H1 (cell line): ENCODE measurements at regions of chr1 and their contacts with region 1.

Region 1: DNA sequence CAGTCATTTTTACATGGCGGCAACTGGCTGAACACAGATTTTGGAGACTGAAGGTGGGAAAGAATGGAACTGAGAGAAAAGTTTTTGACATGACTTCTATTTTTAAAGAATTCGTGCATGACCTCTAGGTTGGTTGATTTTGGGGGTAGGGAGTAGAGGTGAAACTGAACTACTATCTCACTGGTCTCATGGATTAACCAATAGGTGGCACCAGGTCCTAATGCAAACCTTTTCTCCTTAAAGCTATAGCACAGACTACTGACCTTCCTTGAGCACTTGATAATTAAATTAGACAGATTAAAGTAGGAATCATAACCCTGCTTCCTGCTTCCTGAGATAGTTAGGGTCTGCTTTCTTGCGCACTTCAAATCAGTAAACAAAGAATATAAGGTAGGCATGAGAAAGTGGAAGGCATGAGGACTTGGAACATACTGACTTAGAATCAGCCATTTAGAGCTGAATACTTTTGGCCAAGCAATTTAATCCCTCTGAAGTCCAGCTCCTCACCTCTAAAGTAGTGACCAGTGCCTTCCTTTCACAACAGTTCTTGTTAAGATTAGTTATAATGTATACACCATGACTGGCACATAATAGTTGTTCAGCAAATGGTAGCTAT is 206.0 kb downstream of the CENPF start:
- DNase-seq: no peak
- H3K4me3 ChIP-seq: no peak overlapping the region
- H3K27ac ChIP-seq: no peak overlapping the region
- H3K4me1 ChIP-seq: no peaks in the 10 kb centered on the region
- H3K27me3 ChIP-seq: no peaks in the 10 kb centered on the region
- CTCF ChIP-seq: peak in 2 of 3 experiments; percentile 60 to 62; a peak in 2 of 4 replicates
- EP300 ChIP-seq: no peak
- POLR2A ChIP-seq: no peak
- RAD21 ChIP-seq: peak; percentile 86 to 88

Region 2: DNA sequence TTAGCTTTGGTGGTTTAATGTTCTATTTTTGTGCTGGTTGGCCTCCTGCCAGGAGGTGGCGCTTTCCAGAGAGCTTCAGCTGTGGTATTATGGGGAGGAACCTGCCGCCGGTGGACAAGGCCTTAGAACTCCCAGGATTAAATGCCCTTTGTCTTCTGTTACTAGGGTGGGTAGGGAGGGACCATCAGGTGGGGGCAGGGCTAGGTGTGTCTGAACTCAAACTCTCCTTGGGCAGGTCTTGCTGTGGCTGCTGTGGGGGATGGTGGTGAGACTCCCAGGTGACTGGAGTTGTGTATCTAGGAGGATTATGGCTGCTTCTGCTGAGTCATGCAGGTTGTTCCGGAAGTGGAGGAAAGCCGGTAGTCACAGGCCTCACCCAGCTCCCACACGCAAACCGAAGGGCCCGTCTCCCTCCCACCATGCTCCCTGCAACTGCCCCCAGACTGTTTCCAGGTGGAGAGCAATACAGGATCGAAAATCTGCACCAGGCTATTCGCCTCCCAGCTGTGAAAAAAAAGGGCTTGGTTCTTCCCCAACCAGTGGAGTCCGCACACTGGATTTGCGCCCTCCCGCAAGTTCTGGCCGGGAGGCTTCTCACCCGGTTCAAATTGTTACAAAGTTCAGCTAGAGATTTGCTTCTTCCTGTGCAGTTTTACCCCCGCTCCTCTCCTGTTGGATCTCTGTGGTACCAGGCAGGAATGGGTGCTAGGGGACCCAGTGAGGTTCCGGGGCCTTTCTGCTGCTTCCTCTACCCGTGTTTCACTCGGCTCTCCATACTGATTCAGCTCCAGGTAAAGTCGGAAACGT is 14.6 kb after region 1 on chr1:
- CTCF ChIA-PET with region 1: interaction called, 12 read pairs
- POLR2A ChIA-PET with region 1: no interaction called
- DNase-seq: peak in 1 of 2 experiments; percentile 65
- H3K4me3 ChIP-seq: no peak overlapping the region
- H3K27ac ChIP-seq: no peak overlapping the region
- H3K4me1 ChIP-seq: no peaks in the 10 kb centered on the region
- H3K27me3 ChIP-seq: no peaks in the 10 kb centered on the region
- CTCF ChIP-seq: peak; percentile 27 to 39 (median 34); a peak in 3 of 4 replicates
- EP300 ChIP-seq: no peak
- POLR2A ChIP-seq: no peak
- RAD21 ChIP-seq: peak in 1 of 2 experiments; percentile 45; a peak in 3 of 4 replicates

Region 3: DNA sequence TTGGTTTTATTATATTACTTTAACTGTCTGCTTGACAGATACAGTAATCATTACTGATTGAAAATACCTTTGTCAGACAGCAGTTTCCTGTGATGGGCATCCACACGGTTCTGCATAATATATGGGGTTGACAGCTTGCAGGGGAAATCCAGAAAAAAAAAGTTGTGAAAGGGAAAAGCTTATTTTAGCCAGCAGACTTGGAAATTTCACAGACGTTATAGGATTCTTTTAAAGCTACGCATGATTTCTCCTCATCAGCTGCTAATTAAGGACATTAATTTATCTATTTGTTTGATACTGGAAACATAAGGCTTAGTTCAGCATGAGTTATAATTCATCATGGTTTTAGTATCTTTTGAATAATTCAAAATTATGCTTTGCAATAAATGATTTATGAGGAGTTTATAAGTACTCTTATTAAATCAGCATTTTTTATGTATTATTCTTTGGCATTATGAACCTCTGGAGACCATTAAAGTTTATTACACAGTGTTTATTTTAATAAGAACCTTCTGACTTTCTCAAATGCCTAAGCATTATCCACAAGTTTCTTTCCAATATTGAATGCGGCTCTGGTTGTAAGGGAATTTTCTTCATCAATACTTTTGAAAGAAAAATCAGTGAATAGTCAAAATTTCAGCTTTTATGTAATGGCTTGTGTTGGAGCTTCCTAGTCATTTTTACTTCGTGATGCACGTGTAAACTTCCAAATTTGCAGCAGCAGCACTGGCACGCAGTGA is 38.3 kb after region 1 on chr1:
- CTCF ChIA-PET with region 1: no interaction called
- POLR2A ChIA-PET with region 1: no interaction called
- DNase-seq: no peak
- H3K4me3 ChIP-seq: no peak overlapping the region
- H3K27ac ChIP-seq: no peak overlapping the region
- H3K4me1 ChIP-seq: no peaks in the 10 kb centered on the region
- H3K27me3 ChIP-seq: peaks cover 0 to 1% (median 0%) of the 10 kb centered on the region in 4 experiments; a peak in 1 of 7 replicates
- CTCF ChIP-seq: no peak
- EP300 ChIP-seq: no peak
- POLR2A ChIP-seq: no peak
- RAD21 ChIP-seq: no peak

Region 4: GRCh38 chr1:215076318-215076717 is 267.4 kb after region 1 on chr1:
- CTCF ChIA-PET with region 1: interaction called, 11 read pairs
- POLR2A ChIA-PET with region 1: no interaction called
- DNase-seq: no peak
- H3K4me3 ChIP-seq: no peak overlapping the region
- H3K27ac ChIP-seq: no peak overlapping the region
- H3K4me1 ChIP-seq: no peaks in the 10 kb centered on the region
- H3K27me3 ChIP-seq: peaks cover 8 to 23% (median 21%) of the 10 kb centered on the region in 4 experiments
- CTCF ChIP-seq: peak; percentile 28 to 73 (median 71)
- EP300 ChIP-seq: no peak
- POLR2A ChIP-seq: no peak
- RAD21 ChIP-seq: peak; percentile 61 to 76

Region 5: DNA sequence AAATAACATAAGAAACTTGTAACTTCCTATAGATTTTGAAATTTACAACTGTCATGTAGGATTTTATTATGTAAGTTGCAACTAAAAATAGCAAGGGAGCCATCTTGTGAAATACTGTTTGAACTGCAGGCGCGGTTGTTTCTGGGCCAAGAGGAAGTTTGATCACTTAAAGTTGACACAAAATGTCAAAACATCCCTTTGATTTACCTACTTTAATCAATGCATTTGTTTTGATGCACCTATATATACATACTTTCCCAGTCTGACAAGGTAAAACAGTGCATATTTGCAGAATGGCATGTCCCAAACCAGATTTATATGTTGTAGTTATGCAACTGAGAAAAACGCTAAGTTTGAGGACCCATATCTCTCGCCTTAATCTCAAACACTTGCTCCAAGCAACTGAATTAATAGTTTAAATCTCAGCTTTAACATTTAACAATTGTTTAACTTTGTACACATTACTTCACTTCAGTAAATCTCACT is 337.4 kb after region 1 on chr1:
- CTCF ChIA-PET with region 1: interaction called, 11 read pairs
- POLR2A ChIA-PET with region 1: no interaction called
- DNase-seq: no peak
- H3K4me3 ChIP-seq: no peak overlapping the region
- H3K27ac ChIP-seq: no peak overlapping the region
- H3K4me1 ChIP-seq: no peaks in the 10 kb centered on the region
- H3K27me3 ChIP-seq: no peaks in the 10 kb centered on the region
- CTCF ChIP-seq: peak in 2 of 3 experiments; percentile 48 to 51; a peak in 2 of 4 replicates
- EP300 ChIP-seq: no peak
- POLR2A ChIP-seq: no peak
- RAD21 ChIP-seq: peak; percentile 67 to 74

Region 6: GRCh38 chr1:215526553-215527151 is 717.7 kb after region 1 on chr1:
- CTCF ChIA-PET with region 1: interaction called, 12 read pairs
- POLR2A ChIA-PET with region 1: no interaction called
- DNase-seq: no peak
- H3K4me3 ChIP-seq: no peak overlapping the region
- H3K27ac ChIP-seq: no peak overlapping the region
- H3K4me1 ChIP-seq: no peaks in the 10 kb centered on the region
- H3K27me3 ChIP-seq: no peaks in the 10 kb centered on the region
- CTCF ChIP-seq: peak in 2 of 3 experiments; percentile 36 to 52; a peak in 2 of 4 replicates
- EP300 ChIP-seq: no peak
- POLR2A ChIP-seq: no peak
- RAD21 ChIP-seq: peak; percentile 79 to 87